ENCODE measurements at regions of chr1 and their contacts with region 1.

Region 1: DNA sequence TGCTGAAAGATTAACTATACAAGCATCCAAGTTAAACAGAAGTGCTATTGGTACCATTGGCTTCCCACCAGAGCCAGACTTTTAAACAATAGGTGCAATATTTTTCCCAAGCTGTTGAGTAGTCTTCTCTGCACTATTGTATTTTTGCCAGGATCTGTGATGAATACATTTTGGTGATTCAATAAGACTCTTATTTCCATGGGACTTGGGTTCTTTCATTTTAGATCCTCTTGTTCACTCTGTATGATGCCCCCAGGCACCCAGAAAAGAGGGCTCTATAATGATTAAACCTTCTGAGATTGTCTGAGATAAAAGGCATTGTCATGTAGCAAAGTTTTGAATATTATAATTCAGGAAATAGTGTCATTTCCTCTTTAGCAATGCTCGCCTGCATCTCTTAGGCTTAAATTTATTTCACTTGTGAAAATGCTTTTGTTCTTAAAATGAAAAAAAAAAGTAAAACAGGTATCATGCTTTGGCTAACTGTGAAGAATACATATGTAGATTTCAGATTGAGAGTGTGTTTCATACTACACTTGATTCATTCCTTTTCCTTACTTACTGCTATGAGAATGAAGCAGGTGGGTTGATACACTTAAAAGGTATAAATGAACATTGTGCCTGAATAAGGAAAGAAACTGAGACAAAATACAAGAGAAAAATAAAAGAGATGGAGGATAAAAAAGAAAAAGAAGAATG is 275.0 kb downstream of the HMCN1 start:
- DNase-seq: no peak
- CTCF ChIP-seq: no peak

Region 2: DNA sequence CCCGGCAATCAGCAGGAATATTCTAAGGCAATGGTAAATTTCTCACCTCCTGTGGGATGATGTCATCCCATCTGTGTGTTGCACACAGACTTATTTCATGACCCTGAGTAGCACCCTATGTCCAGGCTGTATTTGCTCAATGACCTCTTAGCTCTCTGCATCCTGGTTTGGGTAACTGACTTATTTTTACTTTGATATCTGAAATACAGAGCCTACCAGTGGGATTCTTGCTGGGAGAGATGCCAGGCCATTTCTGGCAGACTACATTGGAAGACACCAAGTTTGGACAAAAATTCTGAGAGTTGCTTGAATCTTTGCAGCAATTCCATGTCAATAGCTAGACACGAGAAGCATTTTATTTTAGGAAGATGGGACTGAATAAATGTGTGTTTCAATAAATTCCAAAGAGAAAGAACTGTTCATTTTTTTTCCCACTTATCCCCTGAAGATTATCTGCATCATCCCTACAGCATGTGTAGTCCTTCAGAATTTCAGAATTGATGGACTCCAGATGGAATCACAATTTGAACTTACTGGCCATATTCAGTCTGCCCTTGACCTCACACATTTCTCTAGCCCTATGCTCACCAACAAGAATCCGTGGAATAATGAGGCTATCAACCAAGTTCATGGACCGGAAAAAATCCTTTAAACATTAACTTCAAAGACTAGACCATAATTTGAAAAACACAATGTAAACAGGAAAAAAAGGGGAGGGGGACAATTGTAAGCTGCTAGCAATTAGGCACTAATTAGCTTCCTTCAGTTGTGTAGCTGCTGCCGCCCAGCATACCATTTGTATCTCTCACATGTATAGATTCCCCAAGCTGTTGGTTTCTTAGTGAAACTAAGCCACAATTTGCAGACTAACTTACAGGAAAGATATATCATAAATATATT is 48.5 kb before region 1 on chr1:
- CTCF ChIA-PET with region 1: no interaction called
- POLR2A ChIA-PET with region 1: no interaction called
- DNase-seq: no peak
- CTCF ChIP-seq: no peak

Region 3: GRCh38 chr1:185996211-185996610 is 13.0 kb before region 1 on chr1:
- CTCF ChIA-PET with region 1: interaction called, 14 read pairs
- POLR2A ChIA-PET with region 1: no interaction called
- DNase-seq: no peak
- CTCF ChIP-seq: no peak

Measured in GM10248 (cell line).